Activated T-helper 1 cell treated with anti-CD3 and anti-CD28 coated beads, Interleukin-12 subunit alpha, Interleukin-12 subunit beta, Interleukin-2, Interleukin-4 antibody, amounts not matched to agents 30 ng/mL and 10 ng/mL and 1 ng/mL, durations not matched to agents 14 hours and 24 hours and 36 hours (primary cell): ENCODE measurements at regions of chr17 and their contacts with region 1.

Region 1: GRCh38 chr17:74212913-74213791 is at the start of gene TTYH2:
- DNase-seq: peak; percentile 66
- H3K4me3 Mint-ChIP-seq: peak within 1 kb of the TSS; percentile 88
- H3K27ac Mint-ChIP-seq: peak within 1 kb of the TSS; percentile 66
- H3K4me1 Mint-ChIP-seq: peaks cover 53% of the 10 kb centered on the region
- H3K27me3 Mint-ChIP-seq: peaks cover 4% of the 10 kb centered on the region
- total RNA-seq, gene TTYH2: 5.7 and 6.8 TPM in 2 replicates

Region 2: DNA sequence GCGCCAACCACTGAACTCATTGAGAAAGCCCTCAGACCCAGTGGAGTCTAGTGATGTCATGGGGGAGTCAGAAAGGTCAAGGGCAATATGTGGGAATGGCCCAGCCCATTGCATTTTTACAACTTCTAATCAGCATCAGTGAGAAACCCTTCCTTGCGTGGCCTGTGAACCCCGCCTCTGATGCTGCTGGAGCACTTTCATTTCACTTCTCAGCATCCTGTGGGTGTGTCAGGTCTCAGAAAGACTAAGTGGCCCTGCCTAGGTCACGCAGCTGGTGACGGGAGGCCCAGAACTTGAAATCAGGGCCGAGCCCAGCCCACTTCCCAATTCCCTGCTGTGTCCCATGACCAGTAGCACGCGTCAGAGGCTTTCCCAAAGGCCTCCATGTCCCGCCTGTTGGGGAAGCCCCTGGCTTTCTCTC is 67.0 kb after region 1 on chr17:
- intact Hi-C with region 1: loop called (anchors 2 kb)
- DNase-seq: peak; percentile 61
- H3K4me3 Mint-ChIP-seq: peak overlapping the region; percentile 4
- H3K27ac Mint-ChIP-seq: peak overlapping the region; percentile 66
- H3K4me1 Mint-ChIP-seq: peaks cover 34% of the 10 kb centered on the region
- H3K27me3 Mint-ChIP-seq: no peaks in the 10 kb centered on the region

Region 3: GRCh38 chr17:74354123-74354522 is 141.0 kb after region 1 on chr17:
- intact Hi-C with region 1: loop called (anchors 2 kb)
- DNase-seq: peak; percentile 39
- H3K4me3 Mint-ChIP-seq: no peak overlapping the region
- H3K27ac Mint-ChIP-seq: no peak overlapping the region
- H3K4me1 Mint-ChIP-seq: peaks cover 4% of the 10 kb centered on the region
- H3K27me3 Mint-ChIP-seq: peaks cover 45% of the 10 kb centered on the region

Region 4: DNA sequence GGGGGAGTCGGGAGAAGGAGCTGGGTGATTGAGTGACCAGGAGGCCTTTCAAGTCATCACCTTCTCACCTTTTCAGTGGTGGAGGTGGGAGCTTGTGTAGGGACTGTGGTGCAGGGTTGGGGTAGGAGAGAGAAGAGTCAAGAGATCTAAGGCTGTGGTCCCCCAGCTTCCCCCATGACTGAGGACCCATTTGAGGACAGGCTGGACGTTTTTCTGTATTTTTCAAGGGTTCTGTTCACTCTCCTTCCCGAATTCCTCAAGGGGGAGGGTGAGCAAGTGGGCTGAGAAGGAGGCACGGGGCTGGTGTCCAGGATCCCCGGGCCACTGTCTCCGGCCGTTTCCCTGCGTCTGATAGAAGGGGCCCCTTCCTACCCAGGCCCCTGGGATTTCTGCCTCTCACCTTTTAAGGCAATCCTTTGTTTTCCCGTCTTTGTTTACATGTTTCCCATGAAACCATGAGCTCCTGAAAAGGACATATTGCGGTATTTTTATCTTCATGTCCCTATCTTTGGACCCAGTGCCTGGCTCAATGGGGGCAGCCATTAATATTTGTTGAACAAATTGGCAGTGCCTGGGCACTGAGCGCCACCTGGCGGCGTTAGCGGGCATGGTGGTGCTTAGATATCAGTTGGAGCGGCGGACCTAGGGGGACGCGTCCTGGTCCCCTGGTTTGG is 244.1 kb after region 1 on chr17:
- intact Hi-C with region 1: loop called (anchors 1 kb)
- DNase-seq: peak; percentile 54
- H3K4me3 Mint-ChIP-seq: no peak overlapping the region
- H3K27ac Mint-ChIP-seq: peak overlapping the region; percentile 23
- H3K4me1 Mint-ChIP-seq: peaks cover 28% of the 10 kb centered on the region
- H3K27me3 Mint-ChIP-seq: peaks cover 10% of the 10 kb centered on the region